ENCODE measurements at regions of chr3 and their contacts with region 1.

Region 1: DNA sequence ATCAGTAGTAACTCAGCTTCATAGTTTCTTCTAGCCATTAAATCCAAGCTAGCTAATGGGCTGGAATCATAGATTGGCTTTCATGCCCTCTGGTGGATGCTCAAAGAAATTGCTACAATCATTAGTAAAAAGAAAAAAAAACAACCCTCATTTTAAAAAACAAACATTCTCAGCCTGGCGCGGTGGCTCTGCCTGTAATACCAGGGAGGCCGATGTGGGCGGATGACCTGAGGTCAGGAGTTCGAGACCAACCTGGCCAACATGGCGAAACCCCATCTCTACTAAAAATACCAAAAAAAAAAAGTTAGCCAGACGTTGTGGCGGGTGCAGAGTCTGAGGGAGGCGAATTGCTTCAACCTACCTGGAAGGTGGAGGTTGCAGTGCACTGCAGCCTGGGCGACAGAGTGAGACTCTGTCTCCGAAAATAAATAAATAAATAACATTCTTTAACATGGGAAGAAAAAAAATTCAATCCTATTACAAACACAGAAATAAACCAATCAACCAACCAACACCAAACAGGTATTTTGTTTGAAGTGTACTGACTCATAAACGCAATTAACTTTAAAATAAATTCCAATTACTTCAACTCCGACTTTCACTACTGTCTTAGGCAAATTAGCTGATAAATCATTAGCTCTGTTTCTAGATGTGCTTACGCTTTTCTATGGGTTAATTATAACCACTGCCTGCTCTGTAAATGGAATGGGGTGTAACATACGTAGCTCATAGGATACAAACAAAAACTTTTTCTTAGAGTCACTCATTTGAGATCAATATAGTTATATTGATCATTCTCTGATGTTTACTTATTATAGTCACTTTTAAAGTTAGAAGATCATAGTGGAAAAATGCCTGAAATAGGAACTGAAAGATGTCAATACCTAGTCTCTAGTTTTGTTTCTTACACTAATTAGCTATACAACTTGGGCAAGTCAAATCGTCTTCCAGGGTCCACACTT is 24.9 kb downstream of the TMEM207 start:
- DNase-seq: peak; percentile 70 to 73
- H3K4me3 ChIP-seq: no peak overlapping the region
- H3K27ac ChIP-seq: no peak overlapping the region
- H3K4me1 ChIP-seq: no peaks in the 10 kb centered on the region
- H3K27me3 ChIP-seq: no peaks in the 10 kb centered on the region
- CTCF ChIP-seq: peak; percentile 95

Region 2: DNA sequence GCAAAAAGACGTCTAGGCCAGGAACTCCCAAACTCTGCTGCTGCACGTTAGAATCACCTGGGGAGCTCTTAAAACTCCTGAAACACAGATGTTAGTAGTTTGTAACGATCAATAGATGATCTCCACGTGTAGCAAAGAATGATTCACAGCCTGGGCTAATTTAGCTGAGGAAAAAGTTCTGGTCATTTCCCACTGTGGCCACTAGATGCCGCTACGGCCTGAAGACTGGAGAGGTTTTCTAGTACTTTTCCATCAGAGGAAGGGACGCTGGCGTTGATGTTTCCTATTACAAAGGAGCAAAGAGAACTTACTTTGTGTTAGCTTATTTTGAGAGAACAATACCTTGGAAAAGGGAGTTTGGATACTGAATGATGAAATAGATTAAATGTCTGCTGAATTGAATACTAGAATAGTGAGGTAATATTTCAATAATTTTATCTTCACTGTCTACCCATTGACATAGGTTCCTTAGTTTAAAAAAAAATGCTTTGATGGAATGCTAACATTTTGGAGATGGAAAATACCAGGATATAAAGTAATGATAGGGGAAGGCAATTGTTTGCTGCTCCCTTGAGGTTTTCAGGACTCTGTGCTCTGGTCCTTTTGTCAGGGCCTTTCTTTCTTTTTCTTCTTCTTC is 463.1 kb before region 1 on chr3:
- CTCF ChIA-PET with region 1: interaction called, 4 read pairs
- POLR2A ChIA-PET with region 1: no interaction called
- intact Hi-C with region 1: loop called (anchors 2 kb)
- DNase-seq: peak; percentile 79 to 85
- H3K4me3 ChIP-seq: no peak overlapping the region
- H3K27ac ChIP-seq: no peak overlapping the region
- H3K4me1 ChIP-seq: peaks cover 7% of the 10 kb centered on the region
- H3K27me3 ChIP-seq: no peaks in the 10 kb centered on the region
- CTCF ChIP-seq: peak; percentile 100

Region 3: GRCh38 chr3:190302209-190302867 is 122.4 kb before region 1 on chr3:
- CTCF ChIA-PET with region 1: no interaction called
- POLR2A ChIA-PET with region 1: interaction called, 12 read pairs
- intact Hi-C with region 1: no loop called
- DNase-seq: peak in 1 of 2 experiments; percentile 43
- H3K4me3 ChIP-seq: 0 out of 2 replicates have a peak overlapping the region, but pooled peaks have one; percentile 2
- H3K27ac ChIP-seq: no peak overlapping the region
- H3K4me1 ChIP-seq: peaks cover 40% of the 10 kb centered on the region
- H3K27me3 ChIP-seq: no peaks in the 10 kb centered on the region
- CTCF ChIP-seq: no peak

Region 4: GRCh38 chr3:190345027-190345821 is 79.5 kb before region 1 on chr3:
- CTCF ChIA-PET with region 1: no interaction called
- POLR2A ChIA-PET with region 1: no interaction called
- intact Hi-C with region 1: loop called (anchors 2 kb)
- DNase-seq: peak; percentile 79 to 100
- H3K4me3 ChIP-seq: peak overlapping the region; percentile 50; the same call in 1 of the 2 replicates
- H3K27ac ChIP-seq: peak overlapping the region; percentile 98
- H3K4me1 ChIP-seq: peaks cover 40% of the 10 kb centered on the region
- H3K27me3 ChIP-seq: no peaks in the 10 kb centered on the region
- CTCF ChIP-seq: no peak

Region 5: GRCh38 chr3:190396001-190396400 is 28.8 kb before region 1 on chr3:
- CTCF ChIA-PET with region 1: no interaction called
- POLR2A ChIA-PET with region 1: no interaction called
- intact Hi-C with region 1: no loop called
- DNase-seq: no peak
- H3K4me3 ChIP-seq: no peak overlapping the region
- H3K27ac ChIP-seq: no peak overlapping the region
- H3K4me1 ChIP-seq: no peaks in the 10 kb centered on the region
- H3K27me3 ChIP-seq: no peaks in the 10 kb centered on the region
- CTCF ChIP-seq: no peak

Region 6: DNA sequence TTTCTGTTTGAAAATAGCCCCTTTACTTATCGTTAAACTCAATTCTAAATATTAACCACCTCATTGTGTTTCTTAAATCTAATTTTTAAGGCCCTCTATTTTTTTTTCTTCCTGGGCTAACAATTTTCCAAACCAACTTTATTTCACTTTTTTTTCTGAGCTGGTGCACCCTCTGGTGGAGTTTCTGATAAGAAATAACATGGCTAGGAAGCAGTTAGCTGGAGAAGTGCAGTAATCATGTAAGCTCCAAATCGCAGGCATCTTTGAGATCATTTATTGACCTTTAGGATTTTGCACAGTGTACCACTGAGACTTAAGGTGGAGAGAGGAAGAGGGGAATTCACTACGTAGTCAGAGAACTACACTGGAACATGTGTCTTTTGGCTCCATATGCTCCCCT is 18.5 kb after region 1 on chr3:
- CTCF ChIA-PET with region 1: interaction called, 4 read pairs
- POLR2A ChIA-PET with region 1: no interaction called
- intact Hi-C with region 1: loop called (anchors 2 kb)
- DNase-seq: no peak
- H3K4me3 ChIP-seq: no peak overlapping the region
- H3K27ac ChIP-seq: no peak overlapping the region
- H3K4me1 ChIP-seq: peaks cover 17% of the 10 kb centered on the region
- H3K27me3 ChIP-seq: no peaks in the 10 kb centered on the region
- CTCF ChIP-seq: peak; percentile 72

Measured in PC-9 (cell line).